MCF 10A (cell line): ENCODE measurements at regions of chr11 and their contacts with region 1.

Region 1: DNA sequence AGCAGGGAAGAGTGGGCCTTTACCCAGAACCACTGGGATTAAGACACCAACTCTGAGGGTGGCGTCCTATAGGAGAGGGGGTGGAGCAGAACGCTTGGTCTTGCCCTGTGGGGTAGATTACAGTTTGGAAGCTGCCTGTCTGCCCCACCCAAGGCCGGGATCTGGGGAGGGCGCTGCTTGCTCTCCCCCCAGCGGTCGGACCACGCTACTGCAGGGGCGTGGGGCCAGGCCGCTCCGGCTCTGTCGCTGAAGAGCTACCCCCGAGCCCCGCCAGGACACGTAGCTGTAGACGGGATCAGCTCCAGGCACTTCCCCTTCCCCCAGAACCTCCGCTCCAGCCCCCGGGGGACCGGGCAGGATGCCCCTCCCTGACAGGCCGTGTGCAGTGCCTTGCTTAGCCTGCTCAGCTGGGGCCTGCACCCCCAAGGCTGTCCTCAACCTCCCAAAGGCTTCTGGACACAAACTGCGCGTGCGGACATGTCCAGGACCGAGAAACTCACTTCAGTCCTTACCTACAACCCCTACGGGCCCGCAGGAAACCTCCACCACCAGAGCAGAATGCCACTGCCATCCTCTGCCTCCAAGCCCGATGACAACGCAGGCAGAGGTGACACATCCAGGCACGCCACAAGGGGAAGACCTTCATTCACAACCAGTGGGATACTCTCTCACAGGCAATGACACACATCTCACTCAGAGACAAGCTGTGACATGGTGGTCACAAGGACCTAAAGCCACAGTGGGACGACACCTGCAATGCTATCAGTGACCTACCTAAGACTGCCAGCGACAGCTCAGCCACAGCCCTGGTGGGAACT is 3.6 kb downstream of the AHNAK start:
- DNase-seq: peak; percentile 82
- H3K4me3 Mint-ChIP-seq: peak overlapping the region; percentile 99
- H3K27ac Mint-ChIP-seq: peak overlapping the region; percentile 69
- H3K4me1 Mint-ChIP-seq: peaks cover 44% of the 10 kb centered on the region
- H3K27me3 Mint-ChIP-seq: no peaks in the 10 kb centered on the region
- CTCF ChIP-seq: peak; percentile 99

Region 2: DNA sequence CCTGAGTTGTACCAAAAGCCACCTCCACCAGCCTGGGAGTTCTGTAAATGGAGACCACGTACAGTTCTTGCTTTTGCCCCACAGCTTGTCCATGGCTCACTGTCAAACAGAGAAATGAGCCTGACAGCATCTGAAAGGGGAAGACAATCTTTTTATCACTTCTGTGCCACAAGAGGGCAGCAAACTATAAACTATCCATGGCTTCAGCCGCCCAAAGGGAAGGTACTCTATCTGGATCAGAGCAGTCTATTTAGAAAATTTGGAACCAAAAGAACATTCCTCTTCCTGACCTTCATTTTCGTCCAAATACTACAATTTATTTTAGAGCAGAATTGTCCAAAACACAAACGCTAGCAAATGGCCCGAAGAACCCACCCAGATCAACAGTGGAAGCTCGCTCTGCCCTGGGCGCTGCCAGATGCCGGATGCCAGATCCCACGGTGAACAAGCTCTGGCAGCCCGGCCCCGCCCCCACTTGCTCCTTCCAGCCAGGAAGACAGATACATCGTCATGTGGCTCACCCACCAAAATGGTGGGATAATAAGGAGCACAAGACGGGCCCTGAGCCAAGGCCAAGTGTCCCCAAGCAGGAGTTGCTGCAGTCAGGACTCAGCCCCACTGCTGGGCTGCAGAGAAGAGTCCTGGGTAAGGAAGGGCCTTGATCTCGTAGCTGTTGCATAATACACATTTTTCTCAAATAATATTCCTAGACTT is 148.0 kb before region 1 on chr11:
- CTCF ChIA-PET with region 1: interaction called, 145 read pairs
- POLR2A ChIA-PET with region 1: interaction called, 41 read pairs
- intact Hi-C with region 1: loop called (anchors 1 kb)
- DNase-seq: peak; percentile 88
- H3K4me3 Mint-ChIP-seq: peak overlapping the region; percentile 73
- H3K27ac Mint-ChIP-seq: peak overlapping the region; percentile 29
- H3K4me1 Mint-ChIP-seq: peaks cover 11% of the 10 kb centered on the region
- H3K27me3 Mint-ChIP-seq: no peaks in the 10 kb centered on the region
- CTCF ChIP-seq: peak; percentile 76

Region 3: DNA sequence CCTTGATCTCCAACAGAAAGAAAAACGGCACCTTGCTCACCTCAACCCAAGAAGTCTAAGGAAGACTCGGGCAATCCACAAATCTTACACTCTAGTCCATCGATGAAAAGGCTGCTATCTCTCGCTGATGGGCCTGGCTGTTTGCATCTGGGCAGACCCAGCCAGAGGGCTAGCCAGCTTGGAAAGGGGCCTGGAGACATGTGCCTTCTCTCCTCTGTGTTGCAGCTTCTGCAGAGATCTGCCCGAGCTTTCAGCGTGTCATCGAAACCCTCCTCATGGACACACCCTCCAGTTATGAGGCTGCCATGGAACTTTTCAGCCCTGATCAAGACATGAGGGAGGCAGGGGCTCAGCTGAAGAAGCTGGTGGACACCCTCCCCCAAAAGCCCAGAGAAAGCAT is 121.0 kb before region 1 on chr11:
- CTCF ChIA-PET with region 1: interaction called, 86 read pairs
- POLR2A ChIA-PET with region 1: interaction called, 15 read pairs
- intact Hi-C with region 1: loop called (anchors 1 kb)
- DNase-seq: no peak
- H3K4me3 Mint-ChIP-seq: no peak overlapping the region
- H3K27ac Mint-ChIP-seq: no peak overlapping the region
- H3K4me1 Mint-ChIP-seq: no peaks in the 10 kb centered on the region
- H3K27me3 Mint-ChIP-seq: no peaks in the 10 kb centered on the region
- CTCF ChIP-seq: no peak

Region 4: DNA sequence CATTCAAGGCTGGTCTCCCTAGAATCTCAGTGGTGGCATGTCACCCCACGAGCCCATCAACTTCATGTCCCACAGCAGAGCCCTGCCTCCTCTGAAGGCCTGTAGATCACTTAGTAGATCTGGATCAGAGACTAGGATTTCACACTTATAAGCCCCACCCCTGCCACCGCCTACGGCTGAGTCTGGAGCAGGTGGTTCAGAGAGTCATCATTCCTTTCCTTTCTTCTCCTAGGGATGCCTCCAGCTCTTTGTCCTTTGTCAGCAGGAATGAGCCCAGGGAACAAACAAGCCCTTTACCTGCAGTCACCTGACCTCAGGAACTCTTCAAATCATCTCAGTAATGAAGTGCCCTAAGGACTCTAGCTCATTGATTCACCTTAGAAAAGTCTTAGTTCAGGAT is 86.3 kb before region 1 on chr11:
- CTCF ChIA-PET with region 1: no interaction called
- POLR2A ChIA-PET with region 1: no interaction called
- intact Hi-C with region 1: no loop called
- DNase-seq: no peak
- H3K4me3 Mint-ChIP-seq: no peak overlapping the region
- H3K27ac Mint-ChIP-seq: no peak overlapping the region
- H3K4me1 Mint-ChIP-seq: no peaks in the 10 kb centered on the region
- H3K27me3 Mint-ChIP-seq: no peaks in the 10 kb centered on the region
- CTCF ChIP-seq: no peak

Region 5: GRCh38 chr11:62497132-62497915 is 45.6 kb before region 1 on chr11:
- CTCF ChIA-PET with region 1: interaction called, 29 read pairs
- POLR2A ChIA-PET with region 1: interaction called, 26 read pairs
- intact Hi-C with region 1: loop called (anchors 1 kb)
- DNase-seq: peak; percentile 83
- H3K4me3 Mint-ChIP-seq: no peak overlapping the region
- H3K27ac Mint-ChIP-seq: peak overlapping the region; percentile 60
- H3K4me1 Mint-ChIP-seq: peaks cover 28% of the 10 kb centered on the region
- H3K27me3 Mint-ChIP-seq: no peaks in the 10 kb centered on the region
- CTCF ChIP-seq: peak; percentile 41

Region 6: GRCh38 chr11:62573592-62574362 is 30.8 kb after region 1 on chr11 and contains the start of gene EEF1G:
- CTCF ChIA-PET with region 1: interaction called, 10 read pairs
- POLR2A ChIA-PET with region 1: interaction called, 85 read pairs
- intact Hi-C with region 1: no loop called
- DNase-seq: peak; percentile 100
- H3K4me3 Mint-ChIP-seq: peak within 1 kb of the TSS; percentile 100
- H3K27ac Mint-ChIP-seq: peak within 1 kb of the TSS; percentile 100
- H3K4me1 Mint-ChIP-seq: peaks cover 30% of the 10 kb centered on the region
- H3K27me3 Mint-ChIP-seq: no peaks in the 10 kb centered on the region
- CTCF ChIP-seq: no peak
- total RNA-seq, gene EEF1G: 1,510 and 1,855 TPM in 2 replicates

Region 7: DNA sequence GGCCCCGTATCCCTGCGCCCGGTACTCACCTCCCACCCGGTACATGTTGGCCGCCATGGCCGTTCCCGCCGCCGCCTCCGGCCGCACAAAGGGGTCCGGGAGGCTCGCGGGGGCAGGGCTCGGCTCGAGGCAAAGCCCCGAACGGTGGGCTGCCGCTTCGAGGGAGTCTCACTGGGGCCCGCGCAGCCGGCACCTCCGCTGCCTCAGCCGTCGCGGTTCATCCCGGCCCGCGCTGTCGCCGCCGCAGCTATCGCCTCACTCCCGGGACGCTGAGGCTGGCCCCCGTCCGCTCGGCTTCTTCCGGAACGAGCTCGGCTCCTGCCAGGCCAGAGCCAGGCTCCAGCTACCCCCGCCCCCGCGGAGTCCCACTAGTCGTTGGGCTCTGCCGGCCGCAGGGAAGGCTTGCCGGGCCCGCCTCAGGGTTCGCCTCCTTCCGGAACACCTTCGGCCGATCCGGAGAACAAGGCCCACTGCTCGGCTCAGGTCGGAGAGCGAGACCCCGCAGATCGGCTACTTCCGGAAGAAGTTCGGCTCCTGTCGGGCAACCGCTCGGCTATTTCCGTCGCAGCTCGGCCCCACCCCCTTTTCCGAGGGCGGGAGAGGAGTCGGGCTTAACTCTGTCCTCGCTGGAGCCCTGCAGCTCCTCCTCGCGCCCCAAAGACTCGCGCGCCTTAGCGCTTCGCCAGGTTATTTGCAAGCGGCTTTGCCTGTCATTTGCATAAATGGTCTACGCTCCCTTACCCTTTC is 58.6 kb after region 1 on chr11 and contains the start of gene MTA2:
- CTCF ChIA-PET with region 1: no interaction called
- POLR2A ChIA-PET with region 1: interaction called, 12 read pairs
- intact Hi-C with region 1: no loop called
- DNase-seq: peak; percentile 98
- H3K4me3 Mint-ChIP-seq: peak within 1 kb of the TSS; percentile 86
- H3K27ac Mint-ChIP-seq: peak within 1 kb of the TSS; percentile 96
- H3K4me1 Mint-ChIP-seq: peaks cover 38% of the 10 kb centered on the region
- H3K27me3 Mint-ChIP-seq: no peaks in the 10 kb centered on the region
- CTCF ChIP-seq: no peak
- total RNA-seq, gene MTA2: 139 and 176 TPM in 2 replicates

Region 8: DNA sequence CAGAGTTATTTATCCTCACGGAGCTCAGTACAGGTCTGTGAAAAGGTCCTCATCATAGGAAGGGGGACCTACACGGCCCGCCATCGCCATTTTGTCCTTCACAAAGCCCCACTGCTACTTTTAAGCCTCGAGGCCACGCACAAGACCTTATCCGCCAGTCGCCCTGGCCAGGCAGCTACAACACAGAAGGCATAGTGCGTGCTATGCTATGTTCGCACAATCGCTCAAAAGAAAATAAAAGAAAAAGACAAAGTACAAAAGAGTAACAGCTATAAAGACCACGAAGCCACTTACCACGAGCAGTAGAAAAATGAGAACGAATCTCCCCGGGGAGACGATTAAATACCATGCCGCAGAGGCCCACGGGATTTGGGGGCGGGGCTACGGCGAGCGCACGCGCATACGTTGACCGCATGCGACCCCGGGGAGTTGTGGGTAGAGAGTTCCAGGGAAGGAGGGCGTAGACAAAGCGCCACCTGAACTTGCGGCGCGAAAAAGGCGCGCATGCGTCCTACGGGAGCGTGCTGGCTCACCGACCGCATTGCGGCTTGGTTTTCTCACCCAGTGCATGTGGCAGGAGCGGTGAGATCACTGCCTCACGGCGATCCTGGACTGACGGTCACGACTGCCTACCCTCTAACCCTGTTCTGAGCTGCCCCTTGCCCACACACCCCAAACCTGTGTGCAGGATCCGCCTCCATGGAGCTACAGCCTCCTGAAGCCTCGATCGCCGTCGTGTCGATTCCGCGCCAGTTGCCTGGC is 312.8 kb after region 1 on chr11:
- CTCF ChIA-PET with region 1: no interaction called
- POLR2A ChIA-PET with region 1: interaction called, 14 read pairs
- intact Hi-C with region 1: no loop called
- DNase-seq: peak; percentile 98
- H3K4me3 Mint-ChIP-seq: peak overlapping the region; percentile 94
- H3K27ac Mint-ChIP-seq: peak overlapping the region; percentile 64
- H3K4me1 Mint-ChIP-seq: peaks cover 35% of the 10 kb centered on the region
- H3K27me3 Mint-ChIP-seq: no peaks in the 10 kb centered on the region
- CTCF ChIP-seq: no peak

Region 9: DNA sequence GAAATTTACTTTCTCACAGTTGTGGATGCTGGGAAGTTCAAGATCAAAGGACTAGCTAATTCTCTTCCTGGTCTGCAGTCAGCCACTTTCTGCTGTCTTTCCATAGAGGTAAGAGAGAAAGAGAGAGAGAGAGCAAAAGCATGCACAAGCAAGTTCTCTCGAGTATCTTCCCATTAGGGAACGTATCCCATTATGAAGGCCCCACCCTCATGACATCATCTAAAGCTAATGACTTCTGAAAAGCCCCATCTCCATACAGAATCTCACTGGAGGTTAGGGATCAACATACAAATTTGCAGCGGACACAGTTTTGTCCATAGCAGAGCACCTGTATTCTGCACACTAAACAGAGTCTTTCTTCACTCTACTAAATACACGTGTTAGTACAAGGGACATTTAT is 809.2 kb after region 1 on chr11:
- CTCF ChIA-PET with region 1: no interaction called
- POLR2A ChIA-PET with region 1: no interaction called
- intact Hi-C with region 1: no loop called
- DNase-seq: no peak
- H3K4me3 Mint-ChIP-seq: no peak overlapping the region
- H3K27ac Mint-ChIP-seq: no peak overlapping the region
- H3K4me1 Mint-ChIP-seq: no peaks in the 10 kb centered on the region
- H3K27me3 Mint-ChIP-seq: peaks cover 15% of the 10 kb centered on the region
- CTCF ChIP-seq: no peak